Sciatic nerve (tissue), 2 donors: ENCODE measurements at regions of chr1 and their contacts with region 1.

Region 1: DNA sequence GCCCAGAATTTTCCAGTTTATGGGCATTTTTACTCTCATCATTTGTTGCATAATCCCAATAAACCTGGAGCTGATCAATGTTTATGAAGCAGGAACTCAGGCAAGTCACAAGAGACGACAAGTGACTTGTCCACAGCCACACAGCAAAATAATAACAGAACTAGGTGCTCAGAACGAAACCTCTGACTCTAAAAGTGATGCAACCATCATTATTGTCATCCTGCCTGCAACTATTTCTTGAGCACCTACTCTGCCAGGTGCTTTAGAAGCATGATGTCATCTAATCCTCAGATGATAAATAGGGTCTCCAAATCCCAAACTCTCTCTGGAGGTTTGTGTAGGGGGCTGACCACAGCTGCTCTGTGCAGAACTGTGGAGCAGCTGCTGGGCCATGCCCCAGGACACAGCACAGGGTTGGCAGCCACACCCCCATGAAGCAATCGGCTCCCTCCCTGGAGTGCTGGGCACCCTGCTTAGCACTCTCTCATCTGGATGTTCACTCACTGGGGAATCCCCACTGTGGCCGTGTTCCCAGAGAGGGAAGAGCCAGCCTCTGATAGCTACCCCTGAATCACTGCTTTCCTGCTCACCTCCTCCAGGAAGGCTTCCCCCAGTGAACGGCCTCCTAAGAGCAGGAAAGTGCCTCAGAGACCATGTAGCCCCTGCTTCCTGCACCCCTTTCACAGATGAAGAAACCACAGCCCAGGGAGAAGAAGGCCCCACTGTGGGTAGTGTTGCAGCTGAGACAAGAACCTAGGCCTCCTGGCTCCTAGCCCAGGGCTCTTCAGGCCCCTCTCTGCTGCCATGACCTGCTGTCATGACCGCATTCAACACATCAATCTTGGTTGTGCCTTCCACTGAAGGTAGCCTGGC is 2.1 kb downstream of the TTC22 start:
- DNase-seq: peak; percentile 26
- ATAC-seq: no peak

Region 2: GRCh38 chr1:54685335-54685905 is 113.6 kb before region 1 on chr1:
- intact Hi-C with region 1: loop called (anchors 5 kb)
- DNase-seq: no peak
- ATAC-seq: no peak